Left ventricle myocardium inferior (tissue), 1 donor: ENCODE measurements at regions of chr1 and their contacts with region 1.

Region 1: GRCh38 chr1:226061841-226062557 is 517 bp upstream of the H3-3A start:
- DNase-seq: peak; percentile 82
- H3K4me3 ChIP-seq: peak overlapping the region; percentile 82
- H3K27ac ChIP-seq: peak overlapping the region; percentile 99
- H3K4me1 ChIP-seq: peaks cover 58% of the 10 kb centered on the region
- H3K27me3 ChIP-seq: no peaks in the 10 kb centered on the region
- CTCF ChIP-seq: no peak

Region 2: GRCh38 chr1:225911191-225912130 is 150.5 kb before region 1 on chr1:
- intact Hi-C with region 1: no loop called
- DNase-seq: peak; percentile 69
- H3K4me3 ChIP-seq: peak overlapping the region; percentile 43
- H3K27ac ChIP-seq: no peak overlapping the region
- H3K4me1 ChIP-seq: peaks cover 10% of the 10 kb centered on the region
- H3K27me3 ChIP-seq: no peaks in the 10 kb centered on the region
- CTCF ChIP-seq: peak; percentile 98

Region 3: DNA sequence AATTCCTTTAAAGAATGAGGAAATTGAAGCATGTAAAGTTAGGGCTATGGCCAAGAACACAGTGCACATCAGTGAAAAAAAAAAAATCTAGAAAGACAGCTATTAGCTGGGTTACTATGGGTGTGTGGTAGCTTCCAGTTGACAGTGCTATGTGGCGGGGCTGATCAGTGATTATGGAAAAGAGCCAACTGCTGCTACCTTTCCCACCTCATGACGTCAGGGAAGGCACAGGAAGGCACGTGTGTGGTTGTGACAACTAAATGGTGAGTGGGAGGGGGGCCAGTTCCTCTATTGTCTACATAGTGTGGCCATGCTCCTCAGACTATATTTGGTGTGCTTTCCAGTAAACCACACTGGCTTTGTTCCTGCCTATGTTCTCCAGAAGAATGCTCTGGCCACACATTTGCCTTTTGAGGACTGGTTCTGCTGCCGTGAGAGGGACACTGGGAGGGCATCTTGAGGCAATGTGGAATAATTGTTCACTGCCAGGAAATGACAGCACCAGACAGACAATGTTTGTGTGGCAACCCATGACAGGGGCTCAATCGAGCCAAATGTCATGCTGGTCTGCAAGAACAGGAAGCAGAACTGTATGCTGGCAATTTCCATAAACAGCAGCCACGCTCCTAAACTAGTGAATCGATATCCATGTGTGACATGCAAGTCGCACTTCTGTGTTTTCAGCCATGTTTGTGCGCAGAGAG is 59.9 kb before region 1 on chr1:
- intact Hi-C with region 1: loop called (anchors 2 kb)
- DNase-seq: peak; percentile 40
- H3K4me3 ChIP-seq: peak overlapping the region; percentile 30
- H3K27ac ChIP-seq: peak overlapping the region; percentile 99
- H3K4me1 ChIP-seq: peaks cover 60% of the 10 kb centered on the region
- H3K27me3 ChIP-seq: no peaks in the 10 kb centered on the region
- CTCF ChIP-seq: no peak